Naive thymus-derived CD4-positive, alpha-beta T cell (primary cell): ENCODE measurements at regions of chr1 and their contacts with region 1.

Region 1: DNA sequence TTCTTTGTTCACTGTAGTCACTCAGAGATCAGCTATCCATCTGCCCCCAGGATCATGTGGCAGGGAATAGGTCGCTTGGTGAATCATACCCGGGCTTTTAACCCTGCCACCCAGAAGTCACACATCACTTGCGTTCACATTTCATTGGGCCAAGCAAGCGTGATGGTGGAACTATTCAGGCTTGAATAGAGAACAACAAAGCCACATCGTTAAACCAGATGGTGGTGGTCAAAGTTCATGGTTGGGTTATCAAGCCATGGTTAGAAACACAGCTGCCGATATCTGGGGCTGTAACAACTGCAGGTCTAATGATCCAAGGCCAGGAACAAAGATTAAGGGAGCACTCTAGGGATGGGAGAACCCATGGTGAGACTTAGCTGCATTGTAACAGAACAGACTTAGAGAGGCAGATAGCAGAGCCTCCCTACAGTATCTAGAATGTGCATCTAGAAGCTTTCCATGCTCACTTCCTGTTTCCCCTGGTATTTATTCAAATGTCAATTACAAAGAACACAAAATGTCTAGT is 40.0 kb upstream of the PTPRC start:
- DNase-seq: peak in 1 of 9 donors; percentile 22
- ATAC-seq: peak; percentile 57
- H3K4me3 ChIP-seq: peak overlapping the region; percentile 11
- H3K4me3 Mint-ChIP-seq: peak overlapping the region in 9 of 10 donors; percentile 18 to 84 (median 61)
- H3K27ac ChIP-seq: peak overlapping the region; percentile 55
- H3K27ac Mint-ChIP-seq: peak overlapping the region; percentile 58 to 96 (median 93)
- H3K4me1 ChIP-seq: peaks cover 34 to 65% of the 10 kb centered on the region in 2 donors
- H3K4me1 Mint-ChIP-seq: peaks cover 49 to 95% (median 91%) of the 10 kb centered on the region in 7 donors
- H3K27me3 ChIP-seq: no peaks in the 10 kb centered on the region
- H3K27me3 Mint-ChIP-seq: no peaks in the 10 kb centered on the region

Region 2: DNA sequence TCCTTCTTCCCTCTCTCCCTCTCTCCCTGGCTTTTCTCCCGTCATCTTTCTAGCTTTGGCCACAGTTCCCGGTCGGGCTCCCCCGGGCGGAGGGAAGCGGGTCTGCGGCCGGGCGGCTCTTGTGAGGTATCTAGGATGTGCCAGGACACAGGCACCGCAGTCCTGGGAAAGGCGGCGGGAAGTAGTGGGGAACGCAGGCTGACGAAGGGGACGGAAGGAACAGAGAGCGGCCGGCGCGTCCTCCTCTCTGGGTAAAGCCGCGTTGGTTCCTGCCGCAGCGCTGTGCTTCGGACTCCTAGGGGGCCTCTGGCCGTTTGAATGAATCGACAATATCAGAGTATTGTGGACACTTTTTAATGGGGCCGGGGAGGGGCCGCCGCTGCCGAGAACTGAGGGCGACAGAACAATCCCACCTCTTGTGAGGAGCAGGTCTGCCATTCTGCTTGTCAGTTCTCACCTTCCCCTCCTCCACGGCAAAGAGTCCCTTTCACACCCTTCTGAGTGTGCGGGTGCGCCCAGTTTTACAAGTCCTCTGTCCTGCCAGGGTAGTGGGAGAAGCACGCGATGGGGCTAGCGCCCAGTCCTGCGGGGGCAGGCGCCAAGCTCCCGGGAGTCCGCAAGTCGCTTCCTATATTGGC is 682.9 kb before region 1 on chr1:
- CTCF ChIA-PET with region 1: no interaction called
- POLR2A ChIA-PET with region 1: no interaction called
- intact Hi-C with region 1: no loop called
- DNase-seq: peak in 1 of 9 donors; percentile 9
- ATAC-seq: no peak
- H3K4me3 ChIP-seq: no peak overlapping the region
- H3K4me3 Mint-ChIP-seq: peak overlapping the region in 9 of 10 donors; percentile 44 to 83 (median 68)
- H3K27ac ChIP-seq: no peak overlapping the region
- H3K27ac Mint-ChIP-seq: peak overlapping the region in 1 of 9 donors; percentile 60
- H3K4me1 ChIP-seq: peaks cover 59 to 72% of the 10 kb centered on the region in 2 donors
- H3K4me1 Mint-ChIP-seq: peaks cover 60 to 93% (median 85%) of the 10 kb centered on the region in 7 donors
- H3K27me3 ChIP-seq: peaks cover 69 to 84% of the 10 kb centered on the region in 2 donors
- H3K27me3 Mint-ChIP-seq: peaks cover 92 to 100% (median 96%) of the 10 kb centered on the region in 5 donors

Region 3: DNA sequence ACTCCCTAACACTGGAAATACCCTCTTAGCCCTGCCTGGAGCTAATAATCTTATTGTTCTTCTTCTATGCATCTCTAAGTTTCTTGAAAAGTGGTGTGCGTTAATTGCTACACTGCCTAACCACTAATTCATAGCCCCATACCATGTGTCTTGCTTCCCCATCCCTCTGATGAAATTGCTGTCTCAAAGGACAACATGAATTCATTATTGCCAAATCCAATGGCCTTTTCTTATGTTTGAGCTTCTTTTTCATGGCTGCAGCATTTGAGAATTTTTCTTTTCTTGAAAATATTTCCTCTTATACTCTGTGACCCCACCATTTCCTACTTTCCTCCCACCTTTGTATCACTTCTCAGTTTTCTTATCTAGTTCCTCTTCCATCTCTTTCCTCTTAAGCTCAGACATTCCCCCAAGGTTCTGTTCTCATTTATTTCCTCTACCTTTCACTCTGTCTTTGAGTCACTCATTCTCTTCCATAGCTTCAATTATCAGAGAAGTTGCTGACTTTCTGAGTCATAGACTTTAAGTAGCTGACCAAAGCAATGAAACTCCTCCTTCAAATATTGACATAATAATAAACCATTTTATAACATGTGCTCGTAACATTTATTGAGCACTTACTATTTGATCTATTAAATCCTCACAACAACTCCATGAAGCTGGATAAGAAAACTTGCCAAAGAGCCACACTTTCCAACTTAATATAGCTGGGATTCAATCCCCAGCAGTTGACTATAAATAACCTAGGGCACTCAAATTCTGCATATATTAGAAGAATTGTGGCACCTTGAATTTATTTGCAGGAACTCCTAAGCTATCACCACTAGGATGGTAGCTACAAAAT is 22.8 kb before region 1 on chr1:
- CTCF ChIA-PET with region 1: no interaction called
- POLR2A ChIA-PET with region 1: interaction called, 4 read pairs
- intact Hi-C with region 1: loop called in 1 of 2 experiments (anchors 2 kb)
- DNase-seq: no peak
- ATAC-seq: no peak
- H3K4me3 ChIP-seq: no peak overlapping the region
- H3K4me3 Mint-ChIP-seq: peak overlapping the region in 1 of 10 donors; percentile 9
- H3K27ac ChIP-seq: no peak overlapping the region
- H3K27ac Mint-ChIP-seq: peak overlapping the region in 6 of 9 donors; percentile 9 to 74 (median 40)
- H3K4me1 ChIP-seq: no peaks in the 10 kb centered on the region
- H3K4me1 Mint-ChIP-seq: peaks cover 0 to 47% (median 26%) of the 10 kb centered on the region in 7 donors
- H3K27me3 ChIP-seq: no peaks in the 10 kb centered on the region
- H3K27me3 Mint-ChIP-seq: no peaks in the 10 kb centered on the region

Region 4: DNA sequence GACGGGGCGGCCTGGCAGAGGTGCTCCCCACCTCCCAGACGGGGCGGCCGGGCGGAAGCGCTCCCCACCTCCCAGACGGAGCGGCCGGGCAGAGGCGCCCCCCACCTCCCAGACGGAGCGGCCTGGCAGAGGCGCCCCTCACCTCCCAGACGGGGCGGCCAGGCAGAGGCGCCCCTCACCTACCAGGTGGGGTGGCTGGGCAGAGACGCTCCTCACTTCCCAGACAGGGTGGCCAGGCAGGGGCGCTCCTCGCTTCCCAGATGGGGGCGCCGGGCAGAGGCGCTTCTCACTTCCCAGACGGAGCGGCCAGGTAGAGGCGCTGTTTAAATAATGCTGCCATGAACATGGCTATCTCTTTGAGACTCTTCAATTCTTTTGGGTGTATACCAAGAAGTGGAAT is 14.7 kb before region 1 on chr1:
- CTCF ChIA-PET with region 1: interaction called, 4 read pairs
- POLR2A ChIA-PET with region 1: interaction called, 5 read pairs
- intact Hi-C with region 1: loop called in 1 of 2 experiments (anchors 1 kb)
- DNase-seq: no peak
- ATAC-seq: no peak
- H3K4me3 ChIP-seq: no peak overlapping the region
- H3K4me3 Mint-ChIP-seq: no peak overlapping the region
- H3K27ac ChIP-seq: no peak overlapping the region
- H3K27ac Mint-ChIP-seq: peak overlapping the region in 1 of 9 donors; percentile 65
- H3K4me1 ChIP-seq: no peaks in the 10 kb centered on the region
- H3K4me1 Mint-ChIP-seq: peaks cover 0 to 20% (median 6%) of the 10 kb centered on the region in 7 donors
- H3K27me3 ChIP-seq: no peaks in the 10 kb centered on the region
- H3K27me3 Mint-ChIP-seq: no peaks in the 10 kb centered on the region

Region 5: GRCh38 chr1:198612471-198613260 is 13.8 kb after region 1 on chr1:
- CTCF ChIA-PET with region 1: interaction called, 11 read pairs
- POLR2A ChIA-PET with region 1: interaction called, 55 read pairs
- intact Hi-C with region 1: loop called in 1 of 2 experiments (anchors 1 kb)
- DNase-seq: peak in 6 of 9 donors; percentile 30 to 52 (median 41)
- ATAC-seq: peak; percentile 62
- H3K4me3 ChIP-seq: peak overlapping the region; percentile 44
- H3K4me3 Mint-ChIP-seq: peak overlapping the region; percentile 66 to 97 (median 82)
- H3K27ac ChIP-seq: peak overlapping the region; percentile 82
- H3K27ac Mint-ChIP-seq: peak overlapping the region; percentile 95 to 100 (median 98)
- H3K4me1 ChIP-seq: peaks cover 56 to 71% of the 10 kb centered on the region in 2 donors
- H3K4me1 Mint-ChIP-seq: peaks cover 52 to 92% (median 73%) of the 10 kb centered on the region in 7 donors
- H3K27me3 ChIP-seq: no peaks in the 10 kb centered on the region
- H3K27me3 Mint-ChIP-seq: no peaks in the 10 kb centered on the region